HepG2 (cell line): ENCODE measurements at regions of chr2 and their contacts with region 1.

Region 1: GRCh38 chr2:113602869-113603466 is 24.1 kb upstream of the RABL2A start:
- DNase-seq: no peak
- ATAC-seq: peak; percentile 89
- H3K4me3 ChIP-seq: peak overlapping the region; percentile 60 to 90 (median 70); a peak in 5 of 6 replicates
- H3K27ac ChIP-seq: peak overlapping the region; percentile 90
- H3K4me1 ChIP-seq: peaks cover 6% of the 10 kb centered on the region
- H3K27me3 ChIP-seq: no peaks in the 10 kb centered on the region; a peak in 1 of 5 replicates
- CTCF ChIP-seq: no peak
- EP300 ChIP-seq: no peak
- POLR2A ChIP-seq: no peak
- RAD21 ChIP-seq: no peak

Region 2: GRCh38 chr2:113700186-113700841 is 97.3 kb after region 1 on chr2:
- CTCF ChIA-PET with region 1: interaction called, 13 read pairs
- POLR2A ChIA-PET with region 1: no interaction called
- in situ Hi-C with region 1: no loop called
- intact Hi-C with region 1: loop called (anchors 10 kb)
- DNase-seq: peak; percentile 46
- ATAC-seq: peak; percentile 83
- H3K4me3 ChIP-seq: no peak overlapping the region
- H3K27ac ChIP-seq: no peak overlapping the region
- H3K4me1 ChIP-seq: no peaks in the 10 kb centered on the region
- H3K27me3 ChIP-seq: no peaks in the 10 kb centered on the region
- CTCF ChIP-seq: peak; percentile 61
- EP300 ChIP-seq: no peak
- POLR2A ChIP-seq: no peak
- RAD21 ChIP-seq: 0 out of 2 replicates have a peak, but pooled peaks have one; percentile 47

Region 3: GRCh38 chr2:113720167-113720566 is 117.2 kb after region 1 on chr2:
- CTCF ChIA-PET with region 1: interaction called, 13 read pairs
- POLR2A ChIA-PET with region 1: no interaction called
- in situ Hi-C with region 1: no loop called
- intact Hi-C with region 1: no loop called
- DNase-seq: peak; percentile 19
- ATAC-seq: peak; percentile 72
- H3K4me3 ChIP-seq: no peak overlapping the region
- H3K27ac ChIP-seq: no peak overlapping the region
- H3K4me1 ChIP-seq: no peaks in the 10 kb centered on the region
- H3K27me3 ChIP-seq: no peaks in the 10 kb centered on the region
- CTCF ChIP-seq: peak; percentile 37
- EP300 ChIP-seq: no peak
- POLR2A ChIP-seq: no peak
- RAD21 ChIP-seq: no peak

Region 4: DNA sequence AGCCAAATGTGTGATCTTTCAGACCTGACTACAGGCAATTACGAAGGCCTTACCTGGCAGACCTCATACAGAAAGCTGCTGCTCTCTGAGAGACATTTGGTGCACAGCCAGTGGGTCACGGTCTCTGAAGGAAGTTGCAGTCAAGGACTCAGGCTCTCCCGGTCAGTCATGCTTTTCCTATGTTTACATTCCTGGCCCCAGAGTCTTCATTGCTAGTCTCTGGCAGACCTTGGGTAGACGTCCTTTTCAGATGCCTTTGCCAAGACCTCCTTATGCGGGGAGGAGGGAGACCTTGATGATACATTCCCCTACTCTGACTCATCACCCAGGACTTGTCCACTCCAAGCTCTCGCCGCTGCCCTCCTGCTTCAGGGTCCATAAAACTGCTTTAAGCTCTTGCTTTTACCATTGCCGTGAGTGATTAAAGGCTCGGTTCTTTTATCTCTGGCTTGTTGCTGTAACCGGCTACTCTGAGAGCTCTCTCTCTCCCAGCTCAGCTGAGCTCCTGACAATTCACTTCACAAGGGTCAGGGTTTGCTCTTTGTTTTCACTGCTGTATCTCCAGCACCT is 215.5 kb after region 1 on chr2:
- CTCF ChIA-PET with region 1: no interaction called
- POLR2A ChIA-PET with region 1: no interaction called
- in situ Hi-C with region 1: no loop called
- intact Hi-C with region 1: no loop called
- DNase-seq: peak; percentile 77
- ATAC-seq: peak; percentile 89
- H3K4me3 ChIP-seq: peak overlapping the region in 1 of 3 experiments; percentile 9; a peak in 1 of 6 replicates
- H3K27ac ChIP-seq: no peak overlapping the region
- H3K4me1 ChIP-seq: peaks cover 26% of the 10 kb centered on the region
- H3K27me3 ChIP-seq: no peaks in the 10 kb centered on the region; a peak in 2 of 5 replicates
- CTCF ChIP-seq: no peak
- EP300 ChIP-seq: no peak
- POLR2A ChIP-seq: no peak
- RAD21 ChIP-seq: no peak